ENCODE measurements at regions of chr6 and their contacts with region 1.

Region 1: GRCh38 chr6:169701954-169702839 is at the starts of genes C6orf120 and WDR27:
- DNase-seq: peak; percentile 97
- H3K4me3 Mint-ChIP-seq: peak within 1 kb of the TSS; percentile 86
- H3K27ac Mint-ChIP-seq: peak within 1 kb of the TSS; percentile 91
- H3K4me1 Mint-ChIP-seq: peaks cover 41% of the 10 kb centered on the region
- H3K27me3 Mint-ChIP-seq: no peaks in the 10 kb centered on the region
- total RNA-seq, gene C6orf120: 10.7 to 11.7 TPM
- total RNA-seq, gene WDR27: 37.9 to 38.3 TPM

Region 2: GRCh38 chr6:169212897-169213813 is 489.0 kb before region 1 on chr6:
- CTCF ChIA-PET with region 1: no interaction called
- intact Hi-C with region 1: loop called (anchors 2 kb)
- DNase-seq: peak; percentile 93
- H3K4me3 Mint-ChIP-seq: peak overlapping the region; percentile 61
- H3K27ac Mint-ChIP-seq: peak overlapping the region; percentile 79
- H3K4me1 Mint-ChIP-seq: peaks cover 8% of the 10 kb centered on the region
- H3K27me3 Mint-ChIP-seq: no peaks in the 10 kb centered on the region

Region 3: GRCh38 chr6:169556758-169557548 is 145.2 kb before region 1 on chr6:
- CTCF ChIA-PET with region 1: no interaction called
- intact Hi-C with region 1: loop called (anchors 1 kb)
- DNase-seq: peak; percentile 70
- H3K4me3 Mint-ChIP-seq: no peak overlapping the region
- H3K27ac Mint-ChIP-seq: no peak overlapping the region
- H3K4me1 Mint-ChIP-seq: peaks cover 12% of the 10 kb centered on the region
- H3K27me3 Mint-ChIP-seq: peaks cover 8% of the 10 kb centered on the region

Region 4: DNA sequence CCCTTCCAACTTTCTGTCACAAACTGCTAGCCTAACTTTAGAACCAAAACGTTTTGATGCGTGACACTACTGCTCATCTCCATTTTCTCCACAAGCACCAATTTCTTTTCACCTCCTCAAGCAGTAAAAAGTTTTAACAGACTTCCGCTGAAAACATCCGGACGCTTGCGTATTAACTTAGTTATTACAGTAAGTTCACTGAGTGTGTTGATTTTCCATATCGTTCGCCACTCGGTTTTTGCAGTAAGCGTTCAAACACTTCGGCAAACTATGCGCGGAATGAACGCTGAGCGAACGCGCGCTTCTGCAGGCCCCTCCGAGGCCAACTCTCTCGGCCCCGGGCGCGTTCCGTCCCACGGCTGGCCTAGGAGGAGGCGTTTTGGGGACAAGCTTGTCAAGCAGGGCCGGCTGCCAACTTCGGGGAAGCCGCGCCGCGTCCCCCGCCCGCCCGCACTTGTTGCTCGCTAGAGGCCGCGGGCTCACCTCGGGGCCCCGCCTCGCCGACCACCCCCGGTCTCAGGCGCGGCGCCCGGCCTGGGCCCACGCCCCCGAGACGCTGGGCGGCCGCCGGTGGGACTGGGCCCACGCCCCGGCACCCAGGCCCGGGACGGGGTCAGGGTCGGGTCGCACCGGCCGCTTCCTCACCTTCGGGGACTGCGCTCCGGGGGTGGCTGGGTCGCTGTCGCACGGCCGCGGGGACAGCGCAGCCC is 21.2 kb after region 1 on chr6:
- CTCF ChIA-PET with region 1: interaction called, 3 read pairs
- intact Hi-C with region 1: loop called (anchors 1 kb)
- DNase-seq: peak; percentile 62
- H3K4me3 Mint-ChIP-seq: peak overlapping the region; percentile 84
- H3K27ac Mint-ChIP-seq: peak overlapping the region; percentile 94
- H3K4me1 Mint-ChIP-seq: peaks cover 43% of the 10 kb centered on the region
- H3K27me3 Mint-ChIP-seq: no peaks in the 10 kb centered on the region